Vagina (tissue), 2 donors: ENCODE measurements at regions of chr17 and their contacts with region 1.

Region 1: GRCh38 chr17:32794533-32795246 is 82.2 kb downstream of the MYO1D start:
- DNase-seq: no peak
- H3K4me3 ChIP-seq: no peak overlapping the region
- H3K27ac ChIP-seq: no peak overlapping the region
- H3K4me1 ChIP-seq: no peaks in the 10 kb centered on the region
- H3K27me3 ChIP-seq: no peaks in the 10 kb centered on the region
- CTCF ChIP-seq: no peak
- POLR2A ChIP-seq: no peak

Region 2: GRCh38 chr17:32596628-32597027 is 198.1 kb before region 1 on chr17:
- intact Hi-C with region 1: no loop called
- DNase-seq: no peak
- H3K4me3 ChIP-seq: no peak overlapping the region
- H3K27ac ChIP-seq: no peak overlapping the region
- H3K4me1 ChIP-seq: no peaks in the 10 kb centered on the region
- H3K27me3 ChIP-seq: no peaks in the 10 kb centered on the region
- CTCF ChIP-seq: no peak
- POLR2A ChIP-seq: no peak

Region 3: DNA sequence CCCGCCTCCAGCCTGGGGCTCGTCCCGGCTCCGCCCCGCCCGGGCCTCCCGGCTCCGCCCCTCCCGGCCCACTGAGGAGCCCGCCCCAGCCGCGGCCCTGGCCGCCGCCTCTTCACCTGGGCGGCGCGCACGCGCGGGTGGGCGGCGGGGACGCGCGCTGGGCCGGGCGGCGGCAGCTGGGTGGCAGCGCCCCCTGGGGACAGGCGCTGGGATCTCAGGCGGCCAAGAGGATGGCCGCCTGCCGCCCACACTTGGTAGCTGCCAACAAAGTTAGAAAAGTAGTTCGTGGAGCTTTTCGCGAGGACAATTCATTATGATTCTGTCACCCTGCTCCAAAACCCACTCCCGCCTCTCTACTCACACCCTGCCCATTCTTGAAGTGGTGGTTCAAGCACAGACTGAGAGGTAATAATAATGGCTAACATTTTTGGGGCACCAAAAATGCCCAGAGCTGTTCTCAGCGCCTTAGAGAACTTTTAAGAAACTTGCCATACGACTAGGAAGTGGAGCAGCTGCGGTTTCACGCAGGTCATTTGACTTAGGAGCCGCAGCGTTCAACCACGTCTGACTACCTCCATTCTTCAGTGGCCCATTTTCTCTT is 82.6 kb after region 1 on chr17:
- intact Hi-C with region 1: loop called (anchors 5 kb)
- DNase-seq: peak in 1 of 2 donors; percentile 89
- H3K4me3 ChIP-seq: peak overlapping the region; percentile 75 to 81
- H3K27ac ChIP-seq: peak overlapping the region; percentile 95
- H3K4me1 ChIP-seq: peaks cover 36% of the 10 kb centered on the region
- H3K27me3 ChIP-seq: no peaks in the 10 kb centered on the region
- CTCF ChIP-seq: peak; percentile 78 to 92 (median 80)
- POLR2A ChIP-seq: no peak